ENCODE measurements at regions of chr11 and their contacts with region 1.

Region 1: GRCh38 chr11:31107062-31107461 is 262.5 kb downstream of the DCDC1 start:
- DNase-seq: peak; percentile 50
- ATAC-seq: peak; percentile 89
- H3K4me3 ChIP-seq: no peak overlapping the region
- H3K27ac ChIP-seq: no peak overlapping the region
- H3K4me1 ChIP-seq: no peaks in the 10 kb centered on the region
- H3K27me3 ChIP-seq: no peaks in the 10 kb centered on the region; a peak in 1 of 5 replicates
- CTCF ChIP-seq: peak; percentile 78
- EP300 ChIP-seq: no peak
- POLR2A ChIP-seq: no peak
- RAD21 ChIP-seq: 0 out of 2 replicates have a peak, but pooled peaks have one; percentile 19

Region 2: GRCh38 chr11:31233424-31233823 is 126.4 kb after region 1 on chr11:
- CTCF ChIA-PET with region 1: no interaction called
- POLR2A ChIA-PET with region 1: no interaction called
- in situ Hi-C with region 1: loop called (anchors 5 kb)
- intact Hi-C with region 1: no loop called
- DNase-seq: peak; percentile 2
- ATAC-seq: peak; percentile 53
- H3K4me3 ChIP-seq: no peak overlapping the region
- H3K27ac ChIP-seq: no peak overlapping the region
- H3K4me1 ChIP-seq: no peaks in the 10 kb centered on the region
- H3K27me3 ChIP-seq: no peaks in the 10 kb centered on the region
- CTCF ChIP-seq: no peak
- EP300 ChIP-seq: no peak
- POLR2A ChIP-seq: no peak
- RAD21 ChIP-seq: no peak

Region 3: GRCh38 chr11:31641477-31642062 is 534.5 kb after region 1 on chr11:
- CTCF ChIA-PET with region 1: no interaction called
- POLR2A ChIA-PET with region 1: no interaction called
- in situ Hi-C with region 1: no loop called
- intact Hi-C with region 1: loop called (anchors 2 kb)
- DNase-seq: peak; percentile 40
- ATAC-seq: no peak
- H3K4me3 ChIP-seq: no peak overlapping the region
- H3K27ac ChIP-seq: no peak overlapping the region
- H3K4me1 ChIP-seq: no peaks in the 10 kb centered on the region
- H3K27me3 ChIP-seq: no peaks in the 10 kb centered on the region
- CTCF ChIP-seq: peak; percentile 63
- EP300 ChIP-seq: no peak
- POLR2A ChIP-seq: no peak
- RAD21 ChIP-seq: 0 out of 2 replicates have a peak, but pooled peaks have one; percentile 17

Region 4: GRCh38 chr11:31958076-31958735 is 851.1 kb after region 1 on chr11:
- CTCF ChIA-PET with region 1: no interaction called
- POLR2A ChIA-PET with region 1: no interaction called
- in situ Hi-C with region 1: no loop called
- intact Hi-C with region 1: loop called (anchors 5 kb)
- DNase-seq: peak; percentile 15
- ATAC-seq: peak; percentile 95
- H3K4me3 ChIP-seq: no peak overlapping the region
- H3K27ac ChIP-seq: no peak overlapping the region
- H3K4me1 ChIP-seq: no peaks in the 10 kb centered on the region
- H3K27me3 ChIP-seq: peaks cover 0 to 13% of the 10 kb centered on the region in 2 experiments; a peak in 1 of 5 replicates
- CTCF ChIP-seq: peak; percentile 76
- EP300 ChIP-seq: no peak
- POLR2A ChIP-seq: no peak
- RAD21 ChIP-seq: peak; percentile 62

Region 5: GRCh38 chr11:32176223-32176934 is 1069.3 kb after region 1 on chr11:
- CTCF ChIA-PET with region 1: no interaction called
- POLR2A ChIA-PET with region 1: no interaction called
- in situ Hi-C with region 1: no loop called
- intact Hi-C with region 1: loop called (anchors 2 kb)
- DNase-seq: peak; percentile 69
- ATAC-seq: peak; percentile 81
- H3K4me3 ChIP-seq: no peak overlapping the region
- H3K27ac ChIP-seq: no peak overlapping the region
- H3K4me1 ChIP-seq: no peaks in the 10 kb centered on the region
- H3K27me3 ChIP-seq: peaks cover 0 to 19% of the 10 kb centered on the region in 2 experiments; a peak in 4 of 5 replicates
- CTCF ChIP-seq: peak; percentile 84
- EP300 ChIP-seq: no peak
- POLR2A ChIP-seq: no peak
- RAD21 ChIP-seq: peak; percentile 70

Measured in HepG2 (cell line).